Activated CD8-positive, alpha-beta T cell treated with anti-CD3 and anti-CD28 coated beads for 36 hours (primary cell): ENCODE measurements at regions of chr2 and their contacts with region 1.

Region 1: GRCh38 chr2:24827321-24828237 is 34.4 kb downstream of the CENPO start:
- DNase-seq: peak; percentile 85
- ATAC-seq: peak; percentile 86
- H3K4me3 Mint-ChIP-seq: no peak overlapping the region
- H3K27ac Mint-ChIP-seq: peak overlapping the region; percentile 43
- H3K4me1 Mint-ChIP-seq: peaks cover 18% of the 10 kb centered on the region
- H3K27me3 Mint-ChIP-seq: no peaks in the 10 kb centered on the region
- CTCF ChIP-seq: peak; percentile 84

Region 2: GRCh38 chr2:24421668-24422067 is 405.9 kb before region 1 on chr2:
- CTCF ChIA-PET with region 1: interaction called, 63 read pairs
- POLR2A ChIA-PET with region 1: interaction called, 5 read pairs
- intact Hi-C with region 1: no loop called
- DNase-seq: peak; percentile 85
- ATAC-seq: peak; percentile 69
- H3K4me3 Mint-ChIP-seq: no peak overlapping the region
- H3K27ac Mint-ChIP-seq: no peak overlapping the region
- H3K4me1 Mint-ChIP-seq: no peaks in the 10 kb centered on the region
- H3K27me3 Mint-ChIP-seq: peaks cover 1% of the 10 kb centered on the region
- CTCF ChIP-seq: peak; percentile 74

Region 3: GRCh38 chr2:24544456-24545115 is 283.0 kb before region 1 on chr2:
- CTCF ChIA-PET with region 1: no interaction called
- POLR2A ChIA-PET with region 1: no interaction called
- intact Hi-C with region 1: no loop called
- DNase-seq: no peak
- ATAC-seq: peak; percentile 37
- H3K4me3 Mint-ChIP-seq: no peak overlapping the region
- H3K27ac Mint-ChIP-seq: peak overlapping the region; percentile 17
- H3K4me1 Mint-ChIP-seq: peaks cover 26% of the 10 kb centered on the region
- H3K27me3 Mint-ChIP-seq: no peaks in the 10 kb centered on the region
- CTCF ChIP-seq: no peak

Region 4: DNA sequence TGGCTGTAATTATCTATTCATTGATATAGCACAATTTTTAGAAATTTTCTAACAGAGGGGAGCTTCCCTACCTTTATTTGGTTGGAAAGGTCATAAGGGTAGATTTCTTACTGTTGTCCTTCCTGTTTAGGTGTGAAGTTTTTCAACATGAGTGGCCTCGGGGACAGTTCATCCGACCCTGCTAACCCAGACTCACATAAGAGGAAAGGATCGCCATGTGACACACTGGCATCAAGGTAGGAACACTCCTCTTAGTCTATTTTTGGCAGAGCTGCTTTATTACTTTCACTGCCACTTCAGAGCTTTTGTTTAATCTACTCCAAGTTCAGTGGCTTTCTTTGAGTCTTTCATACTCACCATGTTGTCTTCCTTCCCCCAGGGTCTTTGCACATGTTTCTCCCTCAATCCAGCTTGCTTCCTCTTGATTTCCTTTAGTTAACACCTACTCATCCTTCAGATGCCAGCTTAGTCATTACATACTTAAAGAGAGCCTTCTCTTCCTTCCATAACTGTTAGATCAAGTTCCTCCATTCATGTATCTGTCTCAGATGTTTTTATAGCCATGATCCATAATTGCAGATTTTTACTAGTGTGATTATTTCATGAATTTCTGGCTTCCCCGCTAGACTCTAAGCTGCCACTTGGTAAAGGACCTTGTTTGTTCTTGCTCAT is 168.9 kb before region 1 on chr2:
- CTCF ChIA-PET with region 1: no interaction called
- POLR2A ChIA-PET with region 1: no interaction called
- intact Hi-C with region 1: no loop called
- DNase-seq: no peak
- ATAC-seq: no peak
- H3K4me3 Mint-ChIP-seq: no peak overlapping the region
- H3K27ac Mint-ChIP-seq: no peak overlapping the region
- H3K4me1 Mint-ChIP-seq: peaks cover 11% of the 10 kb centered on the region
- H3K27me3 Mint-ChIP-seq: no peaks in the 10 kb centered on the region
- CTCF ChIP-seq: no peak

Region 5: GRCh38 chr2:24816884-24817283 is 10.7 kb before region 1 on chr2:
- CTCF ChIA-PET with region 1: interaction called, 26 read pairs
- POLR2A ChIA-PET with region 1: interaction called, 4 read pairs
- intact Hi-C with region 1: no loop called
- DNase-seq: no peak
- ATAC-seq: no peak
- H3K4me3 Mint-ChIP-seq: no peak overlapping the region
- H3K27ac Mint-ChIP-seq: no peak overlapping the region
- H3K4me1 Mint-ChIP-seq: no peaks in the 10 kb centered on the region
- H3K27me3 Mint-ChIP-seq: no peaks in the 10 kb centered on the region
- CTCF ChIP-seq: no peak

Region 6: GRCh38 chr2:24850944-24851343 is 23.4 kb after region 1 on chr2:
- CTCF ChIA-PET with region 1: no interaction called
- POLR2A ChIA-PET with region 1: no interaction called
- intact Hi-C with region 1: no loop called
- DNase-seq: no peak
- ATAC-seq: no peak
- H3K4me3 Mint-ChIP-seq: no peak overlapping the region
- H3K27ac Mint-ChIP-seq: no peak overlapping the region
- H3K4me1 Mint-ChIP-seq: no peaks in the 10 kb centered on the region
- H3K27me3 Mint-ChIP-seq: no peaks in the 10 kb centered on the region
- CTCF ChIP-seq: no peak

Region 7: GRCh38 chr2:24945907-24946306 is 118.3 kb after region 1 on chr2:
- CTCF ChIA-PET with region 1: no interaction called
- POLR2A ChIA-PET with region 1: no interaction called
- intact Hi-C with region 1: no loop called
- DNase-seq: no peak
- ATAC-seq: no peak
- H3K4me3 Mint-ChIP-seq: no peak overlapping the region
- H3K27ac Mint-ChIP-seq: no peak overlapping the region
- H3K4me1 Mint-ChIP-seq: no peaks in the 10 kb centered on the region
- H3K27me3 Mint-ChIP-seq: no peaks in the 10 kb centered on the region
- CTCF ChIP-seq: no peak